Left cardiac atrium (tissue), 4 donors: ENCODE measurements at regions of chr7 and their contacts with region 1.

Region 1: DNA sequence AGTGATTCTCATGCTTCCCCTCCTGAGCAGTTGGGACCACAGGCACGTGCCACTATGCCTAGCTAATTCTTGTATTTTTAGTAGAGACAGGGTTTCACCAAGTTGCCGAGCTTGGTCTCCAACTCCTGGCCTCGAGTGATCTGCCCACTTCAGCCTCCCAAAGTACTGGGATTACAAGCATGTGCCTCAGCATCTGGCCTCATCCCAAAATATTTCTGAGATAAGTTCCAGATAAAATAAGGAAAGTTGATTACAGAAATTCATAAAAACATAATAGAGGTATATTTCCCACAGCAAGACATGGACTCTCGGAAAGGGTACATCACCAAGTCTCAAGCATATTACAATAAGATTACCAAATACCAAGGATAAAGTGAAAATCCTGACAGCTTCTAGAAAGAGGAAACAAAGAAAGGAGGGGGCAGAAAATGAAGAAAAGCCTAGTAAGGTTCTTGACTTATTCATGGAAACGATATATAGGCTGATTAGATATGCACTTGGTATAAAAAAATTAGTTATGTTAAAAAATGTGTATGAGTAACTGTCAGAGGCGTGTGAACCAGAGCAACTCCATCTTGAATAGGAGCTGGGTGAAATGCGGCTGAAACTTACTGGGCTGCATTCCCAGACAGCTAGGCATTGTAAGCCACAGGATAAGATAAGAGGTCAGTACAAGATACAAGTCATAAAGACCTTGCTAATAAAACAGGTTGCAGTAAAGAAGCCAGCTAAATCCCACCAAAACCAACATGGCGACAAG is 35.0 kb downstream of the IQUB start:
- DNase-seq: no peak
- ATAC-seq: peak in 1 of 2 donors; percentile 54

Region 2: GRCh38 chr7:123338688-123339087 is 160.7 kb before region 1 on chr7:
- intact Hi-C with region 1: no loop called
- DNase-seq: no peak
- ATAC-seq: no peak

Region 3: DNA sequence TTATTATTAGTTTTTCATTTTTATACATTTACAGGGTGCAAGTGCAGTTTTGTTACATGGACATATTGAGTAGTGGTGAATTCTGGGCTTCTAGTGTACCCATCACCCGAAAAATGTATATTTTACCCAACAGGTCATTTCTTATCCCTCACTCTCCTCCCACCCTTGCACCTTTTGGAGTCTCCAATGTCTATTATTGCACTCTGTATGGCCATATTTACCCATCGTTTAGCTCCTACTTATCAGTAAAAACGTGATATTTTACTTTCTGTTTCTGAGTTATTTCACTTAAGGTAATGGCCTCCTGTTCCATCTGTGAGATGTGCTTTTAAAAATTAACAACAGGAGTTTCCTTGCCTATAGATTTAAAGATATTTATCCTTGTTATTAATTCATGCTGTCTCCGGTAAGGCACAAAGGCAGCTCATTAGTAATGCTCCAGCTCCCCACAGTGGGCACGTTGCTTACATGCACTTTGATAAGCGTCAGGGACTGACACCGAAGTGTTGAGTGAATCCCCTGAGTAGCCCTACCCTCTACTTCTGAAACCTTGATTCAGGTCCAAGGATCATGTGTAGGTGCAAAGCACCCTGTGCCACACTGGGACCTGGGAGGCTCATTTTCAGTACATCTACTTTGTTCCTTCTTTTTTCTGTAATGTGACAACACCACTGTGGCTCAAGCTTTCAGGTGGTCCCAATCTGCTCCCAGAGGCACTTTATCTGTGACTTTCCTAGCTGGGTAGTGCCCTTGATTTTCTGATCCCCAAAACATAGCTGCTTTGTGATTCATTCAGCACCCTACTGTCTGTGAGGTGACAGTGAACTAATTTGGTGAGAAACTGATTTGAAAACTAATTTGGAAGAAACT is 372.8 kb after region 1 on chr7:
- intact Hi-C with region 1: loop called in 1 of 2 experiments (anchors 5 kb)
- DNase-seq: peak; percentile 27
- ATAC-seq: peak; percentile 81 to 89